ENCODE measurements at regions of chr3 and their contacts with region 1.

Region 1: DNA sequence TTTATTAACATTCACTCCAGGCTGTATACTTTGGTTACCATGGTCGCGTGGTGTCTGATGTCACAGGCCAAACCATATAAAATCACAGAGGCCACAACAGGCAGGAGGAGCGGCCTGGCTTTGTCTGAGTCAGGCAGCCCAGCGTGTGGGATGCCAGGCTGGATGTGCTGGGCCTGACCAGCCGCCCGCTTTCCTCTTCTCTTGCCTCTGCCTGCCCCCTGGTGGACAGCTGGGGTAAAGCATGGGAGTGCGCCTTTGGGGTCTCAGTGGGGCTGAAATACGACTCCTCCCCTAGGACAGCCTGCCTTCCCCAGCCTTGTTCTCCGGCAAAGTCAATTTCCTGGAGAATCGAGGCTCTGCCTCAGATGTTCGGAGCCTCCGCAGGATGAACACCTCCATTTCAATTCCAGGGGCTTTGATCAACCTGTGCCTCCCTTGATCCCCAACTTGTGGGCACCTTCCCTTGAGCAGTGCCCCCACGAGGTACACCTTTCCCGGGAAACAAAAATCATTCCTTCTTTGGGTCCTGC is 78.2 kb downstream of the CCNL1 start:
- DNase-seq: peak; percentile 85
- ATAC-seq: peak; percentile 92
- H3K4me3 ChIP-seq: peak overlapping the region; percentile 3 to 22; a peak in 2 of 4 replicates
- H3K27ac ChIP-seq: no peak overlapping the region
- H3K4me1 ChIP-seq: peaks cover 5 to 45% of the 10 kb centered on the region in 2 experiments
- H3K27me3 ChIP-seq: no peaks in the 10 kb centered on the region
- CTCF ChIP-seq: peak in 2 of 3 experiments; percentile 94 to 99; a peak in 4 of 6 replicates
- POLR2A ChIP-seq: no peak
- RAD21 ChIP-seq: no peak

Region 2: DNA sequence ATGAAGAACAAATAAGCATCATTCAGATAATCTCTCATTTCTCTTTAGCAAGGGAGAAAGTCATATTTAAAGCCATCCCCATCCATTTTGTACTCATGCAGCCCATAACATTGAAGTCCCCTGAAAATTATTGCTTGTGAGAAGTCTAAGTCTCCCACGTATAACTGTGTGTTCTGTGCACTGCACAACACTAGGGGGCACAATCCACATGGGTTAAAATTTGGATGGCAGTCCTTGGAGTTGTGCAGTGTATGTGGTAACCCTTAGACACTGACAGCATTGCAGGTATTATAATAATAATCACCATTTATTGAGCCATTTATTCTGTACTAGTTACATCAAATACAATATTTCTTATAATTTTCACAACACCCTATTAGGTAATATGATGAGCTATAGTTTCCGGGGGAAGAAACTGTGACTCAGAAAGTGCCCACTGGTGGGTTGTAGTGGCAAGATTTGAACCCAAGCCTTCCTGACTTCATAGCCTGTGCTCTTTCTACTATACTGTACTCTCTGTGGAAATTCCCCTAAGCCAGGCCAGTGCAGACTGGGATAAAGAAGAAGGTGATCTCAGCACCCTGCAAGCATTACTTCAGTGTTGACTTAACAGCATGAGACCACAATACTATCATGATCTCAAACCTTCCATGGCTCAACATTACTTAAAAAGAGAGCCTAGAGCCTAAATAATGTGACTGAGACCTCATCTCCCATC is 945.7 kb before region 1 on chr3:
- CTCF ChIA-PET with region 1: no interaction called
- POLR2A ChIA-PET with region 1: no interaction called
- RAD21 ChIA-PET with region 1: no interaction called
- intact Hi-C with region 1: loop called (anchors 5 kb)
- DNase-seq: no peak
- ATAC-seq: peak; percentile 92
- H3K4me3 ChIP-seq: no peak overlapping the region
- H3K27ac ChIP-seq: no peak overlapping the region
- H3K4me1 ChIP-seq: no peaks in the 10 kb centered on the region
- H3K27me3 ChIP-seq: no peaks in the 10 kb centered on the region
- CTCF ChIP-seq: peak; percentile 21 to 68 (median 64); a peak in 5 of 6 replicates
- POLR2A ChIP-seq: no peak
- RAD21 ChIP-seq: peak; percentile 50

Region 3: DNA sequence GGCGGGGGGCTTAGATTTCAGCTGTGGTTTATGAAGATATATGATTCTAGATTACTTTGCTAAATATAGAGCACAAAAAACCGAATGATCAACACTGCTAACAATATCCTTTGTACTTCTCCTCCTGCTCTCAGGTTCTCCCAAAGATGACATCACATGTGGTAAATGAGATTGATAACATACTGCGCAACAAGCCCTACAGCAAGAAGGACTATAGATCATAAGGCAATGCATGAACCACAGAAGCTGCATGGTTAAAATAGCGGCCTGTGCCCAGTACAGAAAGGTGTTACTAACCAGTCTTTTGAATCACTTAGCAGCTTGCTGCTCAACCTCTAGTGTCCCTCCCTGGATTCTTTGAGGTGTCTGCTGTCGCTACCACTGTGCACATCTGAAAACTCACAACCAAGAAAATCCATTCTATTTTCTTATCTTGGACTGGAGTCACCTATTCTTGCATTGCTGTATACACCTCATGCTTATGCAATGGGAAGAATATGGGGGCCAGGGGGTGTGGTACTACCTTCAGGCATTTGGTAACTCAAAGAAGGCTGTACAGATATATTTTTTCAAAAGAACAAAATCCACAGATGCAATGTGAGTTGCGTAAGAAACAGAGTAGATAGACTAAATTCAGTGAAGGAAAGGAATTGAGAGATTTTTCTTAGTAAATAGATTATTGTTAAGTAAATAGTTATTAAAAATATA is 545.1 kb before region 1 on chr3:
- CTCF ChIA-PET with region 1: interaction called, 6 read pairs
- POLR2A ChIA-PET with region 1: no interaction called
- RAD21 ChIA-PET with region 1: no interaction called
- intact Hi-C with region 1: loop called (anchors 1 kb)
- DNase-seq: no peak
- ATAC-seq: no peak
- H3K4me3 ChIP-seq: no peak overlapping the region
- H3K27ac ChIP-seq: no peak overlapping the region
- H3K4me1 ChIP-seq: peaks cover 4 to 15% of the 10 kb centered on the region in 2 experiments; a peak in 2 of 4 replicates
- H3K27me3 ChIP-seq: no peaks in the 10 kb centered on the region
- CTCF ChIP-seq: no peak
- POLR2A ChIP-seq: no peak
- RAD21 ChIP-seq: no peak

Region 4: DNA sequence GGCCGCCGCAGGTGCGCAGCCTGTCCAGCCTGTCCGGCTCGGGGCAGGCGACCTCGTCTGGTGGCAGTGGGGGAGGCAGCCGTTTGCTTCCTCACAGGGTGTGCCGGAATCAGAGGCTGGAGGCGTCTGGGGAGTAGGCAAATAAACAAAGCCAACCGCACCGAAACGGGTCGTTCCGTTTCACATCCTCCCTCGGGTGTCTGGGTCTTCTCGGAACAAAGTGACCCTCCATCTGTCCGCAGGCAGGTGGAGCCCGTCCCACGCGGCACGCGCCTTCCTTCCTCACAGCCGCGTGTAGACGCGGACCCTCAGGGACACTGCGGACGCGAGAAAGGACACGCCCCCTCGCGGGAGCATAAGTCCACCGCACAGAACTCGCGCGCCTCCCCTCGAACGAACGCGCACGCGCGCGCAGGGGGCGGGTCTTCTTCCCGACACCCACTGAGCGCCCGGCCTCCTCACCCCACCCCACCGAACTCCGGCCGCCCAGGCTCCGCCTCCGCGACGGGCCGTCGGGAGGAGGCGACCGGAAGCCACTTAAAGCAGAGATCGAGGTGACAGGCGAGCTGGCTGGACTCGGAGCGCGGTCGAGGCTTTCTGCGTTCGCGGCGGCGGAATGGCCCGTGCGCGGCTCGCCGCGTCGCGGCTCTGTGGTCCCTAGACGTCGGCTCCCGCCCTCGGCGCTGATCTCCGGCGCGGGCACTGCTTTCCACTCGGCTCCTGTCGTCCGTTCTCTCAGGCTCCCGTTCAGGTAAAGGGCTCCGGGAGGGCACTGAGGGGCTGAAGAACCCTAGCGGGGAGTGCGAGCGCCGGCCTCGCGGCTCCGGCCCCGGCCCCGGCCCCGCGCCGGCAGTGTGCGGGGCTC is 407.5 kb before region 1 on chr3 and contains the start of gene TIPARP:
- CTCF ChIA-PET with region 1: interaction called, 3 read pairs
- POLR2A ChIA-PET with region 1: interaction called, 3 read pairs
- RAD21 ChIA-PET with region 1: interaction called in 1 of 2 experiments, 6 read pairs
- intact Hi-C with region 1: loop called (anchors 1 kb)
- DNase-seq: peak; percentile 94
- ATAC-seq: peak; percentile 86
- H3K4me3 ChIP-seq: peak within 1 kb of the TSS; percentile 70 to 89
- H3K27ac ChIP-seq: peak within 1 kb of the TSS; percentile 83
- H3K4me1 ChIP-seq: peaks cover 12 to 19% of the 10 kb centered on the region in 2 experiments
- H3K27me3 ChIP-seq: no peaks in the 10 kb centered on the region
- CTCF ChIP-seq: peak; percentile 61 to 97 (median 66)
- POLR2A ChIP-seq: peak; percentile 97
- RAD21 ChIP-seq: peak; percentile 84
- total RNA-seq, gene TIPARP: 51.3 TPM

Region 5: GRCh38 chr3:157130467-157131251 is 48.9 kb after region 1 on chr3:
- CTCF ChIA-PET with region 1: interaction called, 3 read pairs
- POLR2A ChIA-PET with region 1: no interaction called
- RAD21 ChIA-PET with region 1: interaction called in 1 of 2 experiments, 3 read pairs
- intact Hi-C with region 1: loop called (anchors 2 kb)
- DNase-seq: peak; percentile 80
- ATAC-seq: peak; percentile 72
- H3K4me3 ChIP-seq: peak overlapping the region; percentile 25 to 36
- H3K27ac ChIP-seq: peak overlapping the region; percentile 99
- H3K4me1 ChIP-seq: peaks cover 54 to 87% of the 10 kb centered on the region in 2 experiments
- H3K27me3 ChIP-seq: no peaks in the 10 kb centered on the region
- CTCF ChIP-seq: peak in 2 of 3 experiments; percentile 65 to 74; a peak in 4 of 6 replicates
- POLR2A ChIP-seq: no peak
- RAD21 ChIP-seq: no peak